GM12878 (cell line): ENCODE measurements at regions of chr16 and their contacts with region 1.

Region 1: DNA sequence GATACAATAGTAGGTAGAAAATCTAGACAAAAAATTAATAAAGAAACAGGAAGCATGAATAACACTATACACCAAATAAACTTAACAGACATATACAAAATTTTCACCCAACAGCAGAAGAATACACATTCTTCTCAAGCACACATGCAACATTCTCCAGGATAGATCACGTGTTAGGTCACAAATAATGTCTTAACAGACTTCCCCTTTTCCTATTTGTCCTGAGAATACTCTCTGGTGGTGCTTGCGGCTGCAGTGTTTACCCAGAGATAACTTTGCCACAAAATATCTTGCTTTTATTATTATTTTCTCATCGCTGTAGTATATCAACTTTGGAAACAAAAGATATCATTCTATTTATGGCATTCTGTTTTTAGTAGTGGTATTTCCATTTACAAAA is 40.6 kb upstream of the ZNF267 start:
- DNase-seq: no peak
- ATAC-seq: no peak
- H3K4me3 ChIP-seq: no peak overlapping the region
- H3K27ac ChIP-seq: no peak overlapping the region
- H3K4me1 ChIP-seq: no peaks in the 10 kb centered on the region
- H3K27me3 ChIP-seq: no peaks in the 10 kb centered on the region
- CTCF ChIP-seq: no peak
- EP300 ChIP-seq: no peak
- POLR2A ChIP-seq: no peak
- RAD21 ChIP-seq: no peak

Region 2: GRCh38 chr16:31880322-31880979 is 47.4 kb after region 1 on chr16:
- CTCF ChIA-PET with region 1: no interaction called
- POLR2A ChIA-PET with region 1: no interaction called
- RAD21 ChIA-PET with region 1: no interaction called
- SMC1A ChIA-PET with region 1: no interaction called
- in situ Hi-C with region 1: loop called (anchors 10 kb)
- intact Hi-C with region 1: no loop called
- DNase-seq: peak; percentile 38
- ATAC-seq: peak; percentile 65
- H3K4me3 ChIP-seq: peak overlapping the region; percentile 51; the same call in 1 of the 2 replicates
- H3K27ac ChIP-seq: peak overlapping the region; percentile 30
- H3K4me1 ChIP-seq: peaks cover 18% of the 10 kb centered on the region
- H3K27me3 ChIP-seq: no peaks in the 10 kb centered on the region
- CTCF ChIP-seq: 0 out of 6 replicates have a peak, but pooled peaks of 1 of the 3 experiments have one; percentile 2
- EP300 ChIP-seq: 0 out of 4 replicates have a peak, but pooled peaks of 1 of the 2 experiments have one; percentile 26
- POLR2A ChIP-seq: no peak
- RAD21 ChIP-seq: no peak